ENCODE measurements at regions of chr2 and their contacts with region 1.

Region 1: DNA sequence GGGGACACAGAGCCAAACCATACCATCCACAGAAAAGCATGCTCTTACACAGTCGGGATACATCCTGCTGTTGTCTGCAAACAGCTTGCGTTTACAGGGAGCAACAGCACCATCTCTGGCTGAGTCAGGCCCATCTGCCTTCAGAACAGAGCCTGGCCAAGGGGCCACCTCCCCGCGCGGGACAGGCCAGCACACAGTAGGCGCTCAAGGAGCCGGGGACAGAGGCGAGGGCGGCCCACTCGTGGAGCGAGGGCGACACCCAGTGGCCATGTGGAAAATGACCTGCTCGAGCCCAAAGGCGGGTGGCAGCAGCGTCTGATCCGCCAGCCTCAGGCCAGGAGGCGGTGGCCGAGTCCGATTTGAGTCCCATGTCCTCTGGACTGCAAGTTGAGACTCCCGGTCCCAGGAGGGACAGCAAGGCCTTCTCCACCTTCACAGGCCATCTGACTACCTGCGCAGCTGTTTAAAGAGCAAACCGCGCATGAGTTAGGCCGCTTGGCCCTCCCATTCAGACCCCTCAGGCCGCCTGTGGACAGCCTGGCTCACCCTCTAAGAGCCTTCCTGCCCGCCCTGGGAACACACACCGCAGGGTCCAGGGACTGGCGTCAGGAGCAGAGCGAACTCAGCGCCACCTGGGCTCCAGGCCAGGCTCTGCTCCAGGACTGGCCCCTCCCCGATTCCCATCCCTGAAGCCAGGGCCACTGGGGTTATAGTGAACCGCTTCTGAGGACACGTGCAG is 38.3 kb downstream of the TTC32 start:
- DNase-seq: peak; percentile 50
- H3K4me3 Mint-ChIP-seq: no peak overlapping the region
- H3K27ac Mint-ChIP-seq: no peak overlapping the region
- H3K4me1 Mint-ChIP-seq: peaks cover 13% of the 10 kb centered on the region
- H3K27me3 Mint-ChIP-seq: peaks cover 1% of the 10 kb centered on the region

Region 2: GRCh38 chr2:18435421-18436037 is 1427.9 kb before region 1 on chr2:
- intact Hi-C with region 1: loop called (anchors 1 kb)
- DNase-seq: no peak
- H3K4me3 Mint-ChIP-seq: no peak overlapping the region
- H3K27ac Mint-ChIP-seq: no peak overlapping the region
- H3K4me1 Mint-ChIP-seq: no peaks in the 10 kb centered on the region
- H3K27me3 Mint-ChIP-seq: peaks cover 6% of the 10 kb centered on the region

Region 3: GRCh38 chr2:18520451-18521425 is 1342.7 kb before region 1 on chr2:
- intact Hi-C with region 1: loop called (anchors 1 kb)
- DNase-seq: peak; percentile 47
- H3K4me3 Mint-ChIP-seq: no peak overlapping the region
- H3K27ac Mint-ChIP-seq: no peak overlapping the region
- H3K4me1 Mint-ChIP-seq: no peaks in the 10 kb centered on the region
- H3K27me3 Mint-ChIP-seq: peaks cover 2% of the 10 kb centered on the region

Region 4: DNA sequence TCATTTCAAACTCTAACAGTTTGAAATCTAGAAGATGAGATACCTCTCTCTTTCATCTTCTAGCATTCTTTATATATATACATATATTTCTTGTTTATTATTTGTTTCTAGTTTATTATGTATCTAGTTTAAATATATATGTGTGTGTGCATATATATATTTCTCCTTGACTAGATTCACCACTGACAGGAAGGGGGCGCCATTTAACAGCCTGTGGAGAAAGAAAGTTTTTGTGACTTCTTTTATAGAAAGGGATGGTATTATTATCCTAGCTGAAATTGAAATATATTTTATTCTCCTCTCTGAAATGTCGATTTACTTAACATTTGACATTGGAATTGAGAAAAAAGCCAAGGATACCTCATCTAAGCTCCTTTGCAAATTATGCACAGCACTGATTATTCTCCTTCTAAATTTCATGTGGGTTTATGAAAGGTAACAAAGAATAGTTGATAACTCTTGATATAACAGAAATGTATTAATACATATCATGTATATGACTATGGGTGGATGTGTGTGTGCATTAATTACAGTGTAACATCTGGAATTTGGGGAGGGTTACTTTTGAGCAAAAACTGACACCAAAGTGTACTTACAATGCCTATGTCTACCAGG is 1113.5 kb before region 1 on chr2:
- intact Hi-C with region 1: loop called (anchors 1 kb)
- DNase-seq: no peak
- H3K4me3 Mint-ChIP-seq: no peak overlapping the region
- H3K27ac Mint-ChIP-seq: no peak overlapping the region
- H3K4me1 Mint-ChIP-seq: no peaks in the 10 kb centered on the region
- H3K27me3 Mint-ChIP-seq: no peaks in the 10 kb centered on the region

Region 5: GRCh38 chr2:19362755-19363473 is 500.6 kb before region 1 on chr2:
- intact Hi-C with region 1: loop called (anchors 5 kb)
- DNase-seq: no peak
- H3K4me3 Mint-ChIP-seq: peak overlapping the region; percentile 82
- H3K27ac Mint-ChIP-seq: no peak overlapping the region
- H3K4me1 Mint-ChIP-seq: peaks cover 25% of the 10 kb centered on the region
- H3K27me3 Mint-ChIP-seq: peaks cover 80% of the 10 kb centered on the region

Region 6: DNA sequence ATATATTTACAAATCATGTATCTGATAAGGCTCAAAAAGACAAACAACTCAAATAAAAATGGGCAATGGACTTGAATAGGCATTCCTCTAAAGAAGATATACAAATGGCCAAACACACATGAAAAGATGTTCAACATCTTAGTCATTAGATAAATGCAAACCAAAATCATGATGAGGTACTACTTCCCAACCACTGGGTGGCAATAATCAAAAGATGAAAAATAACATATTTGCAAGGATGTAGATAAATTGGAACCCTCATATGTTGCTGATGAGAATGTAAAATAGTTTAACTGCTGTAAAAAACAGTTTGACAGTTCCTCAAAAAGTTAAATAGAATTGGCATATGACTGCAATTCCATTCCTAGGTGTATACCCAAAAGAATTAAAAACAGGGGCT is 94.0 kb before region 1 on chr2:
- intact Hi-C with region 1: loop called (anchors 5 kb)
- DNase-seq: no peak
- H3K4me3 Mint-ChIP-seq: no peak overlapping the region
- H3K27ac Mint-ChIP-seq: no peak overlapping the region
- H3K4me1 Mint-ChIP-seq: no peaks in the 10 kb centered on the region
- H3K27me3 Mint-ChIP-seq: peaks cover 11% of the 10 kb centered on the region

Measured in activated T-helper 2 cell treated with anti-CD3 and anti-CD28 coated beads, Interferon-gamma antibody, Interleukin-2, Interleukin-4, amounts not matched to agents 10 μg/mL and 5 μg/mL and 100 μg/mL, durations not matched to agents 14 hours and 24 hours and 36 hours (primary cell).